Panc1 (cell line): ENCODE measurements at regions of chr18 and their contacts with region 1.

Region 1: DNA sequence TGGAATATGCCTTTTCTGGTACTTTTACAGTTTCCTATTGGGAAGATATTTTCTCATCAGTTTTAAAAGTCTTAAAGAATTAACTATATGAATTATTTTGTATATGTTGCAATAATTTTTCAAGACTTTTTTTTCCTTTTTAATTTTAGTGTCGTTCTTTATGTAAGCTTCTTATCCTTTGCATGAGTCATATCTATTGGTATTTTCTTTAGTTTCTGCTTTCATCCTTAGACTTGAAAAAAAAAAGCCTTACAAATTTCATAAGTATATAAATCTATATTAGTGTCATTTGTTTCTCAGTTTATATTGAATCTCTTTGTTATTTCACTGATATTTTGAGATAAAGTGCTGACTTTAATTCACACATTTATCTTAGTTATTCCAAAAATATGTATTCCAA is 94.9 kb downstream of the DSEL start:
- DNase-seq: no peak
- ATAC-seq: no peak
- H3K4me3 ChIP-seq: no peak overlapping the region
- H3K27ac ChIP-seq: no peak overlapping the region
- H3K4me1 ChIP-seq: no peaks in the 10 kb centered on the region
- H3K27me3 ChIP-seq: no peaks in the 10 kb centered on the region
- CTCF ChIP-seq: no peak

Region 2: GRCh38 chr18:67400502-67401117 is 21.1 kb before region 1 on chr18:
- CTCF ChIA-PET with region 1: no interaction called
- POLR2A ChIA-PET with region 1: interaction called, 16 read pairs
- in situ Hi-C with region 1: no loop called
- intact Hi-C with region 1: no loop called
- DNase-seq: no peak
- ATAC-seq: no peak
- H3K4me3 ChIP-seq: no peak overlapping the region
- H3K27ac ChIP-seq: no peak overlapping the region
- H3K4me1 ChIP-seq: no peaks in the 10 kb centered on the region
- H3K27me3 ChIP-seq: no peaks in the 10 kb centered on the region
- CTCF ChIP-seq: no peak

Region 3: GRCh38 chr18:67411116-67411515 is 10.6 kb before region 1 on chr18:
- CTCF ChIA-PET with region 1: no interaction called
- POLR2A ChIA-PET with region 1: no interaction called
- in situ Hi-C with region 1: no loop called
- intact Hi-C with region 1: no loop called
- DNase-seq: no peak
- ATAC-seq: no peak
- H3K4me3 ChIP-seq: no peak overlapping the region
- H3K27ac ChIP-seq: no peak overlapping the region
- H3K4me1 ChIP-seq: no peaks in the 10 kb centered on the region
- H3K27me3 ChIP-seq: no peaks in the 10 kb centered on the region
- CTCF ChIP-seq: no peak